ENCODE measurements at regions of chr16 and their contacts with region 1.

Region 1: DNA sequence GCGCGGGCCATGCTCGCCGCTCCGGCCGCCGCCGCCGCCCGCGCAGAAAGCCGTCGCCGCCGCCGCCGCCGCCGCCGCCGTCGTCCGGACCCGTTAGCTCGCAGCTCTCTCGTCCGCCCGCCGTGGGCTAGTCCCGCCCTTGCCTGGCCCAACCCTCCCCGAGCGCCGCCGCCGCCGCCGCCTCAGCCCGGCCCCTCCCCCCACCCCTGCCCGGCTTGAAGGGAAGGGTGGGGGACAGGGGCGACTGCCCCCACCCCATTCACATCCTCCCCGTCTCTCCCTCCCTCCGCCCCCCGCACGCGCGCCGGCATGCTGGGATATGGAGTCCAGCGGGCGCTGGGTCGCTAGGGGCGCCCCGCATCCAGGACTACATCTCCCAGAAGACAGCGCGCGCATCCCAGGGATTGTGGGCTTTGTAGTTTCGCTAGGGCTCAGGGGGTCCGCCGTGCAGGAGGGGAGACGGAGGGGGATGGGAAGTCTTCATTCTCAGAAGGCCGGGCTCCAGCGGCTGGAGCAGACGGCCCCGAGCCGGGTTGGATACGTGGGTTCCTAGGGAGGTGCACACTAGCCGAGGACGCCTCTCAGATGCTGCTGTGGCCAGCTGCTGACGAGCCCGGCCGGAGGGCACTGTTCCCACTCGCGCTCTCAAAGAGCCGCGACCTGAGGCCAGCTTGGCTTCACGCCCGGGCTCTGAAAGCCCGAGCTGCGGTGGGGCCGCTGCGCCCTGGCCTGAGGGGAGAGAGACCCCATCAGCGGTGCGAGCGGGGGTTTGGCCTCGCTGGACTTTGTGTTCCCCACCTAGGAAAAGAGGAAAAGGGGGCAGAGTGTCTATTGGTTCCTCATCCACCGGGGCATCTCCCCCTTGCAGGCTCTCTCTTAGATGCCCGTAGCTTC is at the start of gene ST3GAL2:
- DNase-seq: peak; percentile 96
- H3K4me3 Mint-ChIP-seq: peak within 1 kb of the TSS; percentile 91
- H3K27ac Mint-ChIP-seq: peak within 1 kb of the TSS; percentile 61
- H3K4me1 Mint-ChIP-seq: peaks cover 27% of the 10 kb centered on the region
- H3K27me3 Mint-ChIP-seq: no peaks in the 10 kb centered on the region
- total RNA-seq, gene ST3GAL2: 9.3 to 9.9 TPM

Region 2: DNA sequence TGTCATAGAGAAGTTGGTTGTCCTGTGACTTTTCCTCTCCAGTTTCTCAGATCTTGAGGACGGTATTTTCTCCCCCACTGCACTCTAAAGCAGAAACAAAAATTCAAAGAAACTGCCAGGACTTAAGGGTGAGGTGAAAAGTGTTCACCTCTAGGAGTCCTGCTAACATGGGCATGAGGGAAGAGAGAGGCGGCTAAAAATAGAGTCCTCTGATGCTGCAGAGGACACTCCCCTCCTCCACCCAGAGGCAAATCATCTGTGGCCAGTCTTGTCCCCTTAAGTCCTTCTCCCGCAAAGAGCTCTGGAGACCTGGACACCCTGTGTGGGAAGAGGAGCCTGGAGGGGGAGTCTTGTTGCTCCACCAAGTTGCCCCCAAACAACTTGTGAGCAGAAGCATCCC is 97.2 kb before region 1 on chr16:
- CTCF ChIA-PET with region 1: no interaction called
- intact Hi-C with region 1: loop called (anchors 1 kb)
- DNase-seq: no peak
- H3K4me3 Mint-ChIP-seq: no peak overlapping the region
- H3K27ac Mint-ChIP-seq: no peak overlapping the region
- H3K4me1 Mint-ChIP-seq: peaks cover 8% of the 10 kb centered on the region
- H3K27me3 Mint-ChIP-seq: no peaks in the 10 kb centered on the region

Region 3: DNA sequence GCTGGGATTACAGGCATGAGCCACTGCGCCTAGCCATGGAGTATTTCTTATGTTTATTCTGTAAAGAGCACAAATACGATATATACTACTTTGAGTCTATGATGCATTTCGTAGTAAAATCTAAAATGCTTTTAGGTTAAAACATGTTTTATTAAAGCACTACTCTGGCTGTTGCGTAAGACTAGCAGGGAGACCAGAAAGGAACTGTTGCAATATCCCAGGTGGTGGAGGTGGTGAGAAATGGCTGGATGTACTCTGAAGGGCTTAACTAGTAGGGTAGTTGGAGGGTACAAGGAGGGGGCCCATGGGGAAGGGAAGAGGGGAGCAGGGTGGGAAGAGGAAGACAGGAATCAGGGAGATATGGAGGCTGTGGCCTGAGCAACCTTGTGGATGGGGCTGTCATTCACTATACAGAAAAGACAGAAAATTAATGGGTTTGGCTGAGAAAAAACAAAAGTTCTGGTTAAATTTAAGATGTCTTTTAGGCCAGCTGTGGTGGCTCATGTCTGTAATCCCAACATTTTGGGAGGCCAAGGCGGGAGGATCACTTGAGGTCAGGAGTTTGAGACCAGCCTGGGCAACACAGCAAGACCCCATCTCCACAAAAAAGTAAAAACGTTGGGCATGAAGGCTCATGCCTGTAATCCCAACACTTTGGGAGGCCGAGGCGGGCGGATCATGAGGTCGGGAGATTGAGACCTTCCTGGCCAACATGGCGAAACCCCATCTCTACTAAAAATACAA is 36.1 kb before region 1 on chr16:
- CTCF ChIA-PET with region 1: no interaction called
- intact Hi-C with region 1: loop called (anchors 2 kb)
- DNase-seq: no peak
- H3K4me3 Mint-ChIP-seq: no peak overlapping the region
- H3K27ac Mint-ChIP-seq: peak overlapping the region; percentile 25
- H3K4me1 Mint-ChIP-seq: peaks cover 46% of the 10 kb centered on the region
- H3K27me3 Mint-ChIP-seq: no peaks in the 10 kb centered on the region

Region 4: DNA sequence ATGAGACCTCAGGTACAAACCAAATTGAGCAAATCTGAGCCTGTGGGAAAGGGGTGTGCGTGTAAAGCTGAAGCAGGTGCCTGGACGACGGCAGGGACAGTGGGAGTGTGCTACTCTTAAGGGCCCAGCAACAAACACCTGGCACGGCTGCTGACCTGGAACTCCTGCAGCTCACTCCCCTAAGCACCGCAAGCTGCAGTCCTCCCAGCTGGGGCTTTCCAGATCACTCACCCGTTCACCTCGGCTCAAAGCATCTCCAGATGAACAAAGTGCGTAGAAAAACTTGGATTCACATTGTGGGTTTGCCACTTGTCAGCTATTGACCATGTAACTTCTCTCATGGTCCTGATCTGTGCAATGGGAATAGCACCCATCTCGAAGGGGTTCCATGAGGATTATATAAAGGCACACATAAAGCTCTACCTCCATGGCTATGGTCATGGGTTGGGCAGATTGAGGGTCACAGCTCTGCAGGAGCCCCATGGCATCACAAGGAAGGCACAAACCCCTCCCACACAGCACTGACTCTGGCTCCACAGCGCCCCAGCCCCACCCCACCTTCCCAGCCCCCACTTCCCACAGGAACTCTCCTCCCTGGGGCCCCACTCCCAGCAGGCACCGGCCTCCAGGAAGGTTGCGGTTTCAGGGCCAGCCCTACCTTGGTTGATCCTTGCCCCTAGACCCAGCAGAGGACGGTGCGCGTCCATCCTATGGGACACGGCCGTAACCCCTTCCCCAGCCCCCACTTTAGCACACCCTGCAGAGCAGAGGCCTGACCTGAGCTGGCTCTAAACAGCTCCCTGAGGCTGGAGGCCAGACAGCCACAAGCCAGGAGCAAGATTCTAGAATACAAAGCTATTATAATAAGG is 22.2 kb before region 1 on chr16:
- CTCF ChIA-PET with region 1: interaction called, 10 read pairs
- intact Hi-C with region 1: no loop called
- DNase-seq: no peak
- H3K4me3 Mint-ChIP-seq: no peak overlapping the region
- H3K27ac Mint-ChIP-seq: no peak overlapping the region
- H3K4me1 Mint-ChIP-seq: peaks cover 33% of the 10 kb centered on the region
- H3K27me3 Mint-ChIP-seq: no peaks in the 10 kb centered on the region

Region 5: DNA sequence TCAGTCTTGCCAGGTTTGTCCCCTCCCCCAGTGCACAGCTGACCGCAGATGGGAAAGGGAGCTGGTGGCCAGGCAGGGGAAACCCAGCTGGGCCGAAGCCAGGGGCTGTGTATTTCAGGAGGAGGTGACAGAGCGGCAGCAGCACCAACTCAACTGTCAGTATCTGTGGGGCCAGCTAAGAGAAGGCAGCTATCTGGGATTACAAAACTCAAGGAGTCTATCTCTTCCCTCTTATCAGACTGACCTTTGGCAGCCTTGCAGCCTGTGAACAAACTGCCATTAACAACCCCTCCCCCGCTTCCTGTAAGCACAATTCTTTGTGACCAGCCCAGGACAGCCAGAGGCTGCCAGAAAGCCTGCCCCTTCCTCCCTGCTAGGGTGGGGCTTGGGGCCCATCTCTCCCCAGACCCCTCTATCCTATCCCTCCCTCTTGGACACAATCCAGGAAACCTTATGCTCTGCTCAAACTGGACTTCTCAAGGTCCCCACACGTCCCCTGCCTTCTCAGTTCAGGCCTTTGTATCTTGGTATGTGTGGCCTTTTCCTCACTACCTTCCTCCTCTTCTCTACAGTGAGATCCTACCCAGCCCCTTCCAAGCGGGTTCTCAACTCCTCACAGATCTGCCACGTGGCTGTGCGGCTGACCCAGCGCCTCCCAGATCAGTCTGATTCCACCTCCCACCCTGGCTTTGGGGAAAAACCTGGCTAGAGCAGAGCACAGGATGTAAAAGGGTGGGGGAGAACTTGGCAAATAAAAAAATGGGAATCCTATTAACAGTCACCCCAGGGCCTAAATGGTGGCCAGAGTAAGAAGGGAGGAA is 10.8 kb before region 1 on chr16:
- CTCF ChIA-PET with region 1: interaction called, 3 read pairs
- intact Hi-C with region 1: loop called (anchors 1 kb)
- DNase-seq: peak; percentile 82
- H3K4me3 Mint-ChIP-seq: no peak overlapping the region
- H3K27ac Mint-ChIP-seq: peak overlapping the region; percentile 62
- H3K4me1 Mint-ChIP-seq: peaks cover 60% of the 10 kb centered on the region
- H3K27me3 Mint-ChIP-seq: no peaks in the 10 kb centered on the region

Region 6: GRCh38 chr16:70454222-70455034 is 15.2 kb after region 1 on chr16 and contains the start of gene FCSK:
- CTCF ChIA-PET with region 1: interaction called, 3 read pairs
- intact Hi-C with region 1: loop called (anchors 1 kb)
- DNase-seq: peak; percentile 62
- H3K4me3 Mint-ChIP-seq: peak within 1 kb of the TSS; percentile 86
- H3K27ac Mint-ChIP-seq: peak within 1 kb of the TSS; percentile 88
- H3K4me1 Mint-ChIP-seq: peaks cover 18% of the 10 kb centered on the region
- H3K27me3 Mint-ChIP-seq: no peaks in the 10 kb centered on the region
- total RNA-seq, gene FCSK: 12.2 to 12.6 TPM

Region 7: GRCh38 chr16:70470927-70471341 is 31.7 kb after region 1 on chr16:
- CTCF ChIA-PET with region 1: no interaction called
- intact Hi-C with region 1: loop called (anchors 1 kb)
- DNase-seq: no peak
- H3K4me3 Mint-ChIP-seq: no peak overlapping the region
- H3K27ac Mint-ChIP-seq: no peak overlapping the region
- H3K4me1 Mint-ChIP-seq: no peaks in the 10 kb centered on the region
- H3K27me3 Mint-ChIP-seq: no peaks in the 10 kb centered on the region

Region 8: GRCh38 chr16:70553645-70554044 is 114.4 kb after region 1 on chr16:
- CTCF ChIA-PET with region 1: no interaction called
- intact Hi-C with region 1: no loop called
- DNase-seq: no peak
- H3K4me3 Mint-ChIP-seq: no peak overlapping the region
- H3K27ac Mint-ChIP-seq: peak overlapping the region; percentile 21
- H3K4me1 Mint-ChIP-seq: peaks cover 16% of the 10 kb centered on the region
- H3K27me3 Mint-ChIP-seq: no peaks in the 10 kb centered on the region

Region 9: GRCh38 chr16:70770626-70771552 is 331.7 kb after region 1 on chr16:
- CTCF ChIA-PET with region 1: no interaction called
- intact Hi-C with region 1: no loop called
- DNase-seq: peak; percentile 83
- H3K4me3 Mint-ChIP-seq: no peak overlapping the region
- H3K27ac Mint-ChIP-seq: no peak overlapping the region
- H3K4me1 Mint-ChIP-seq: peaks cover 3% of the 10 kb centered on the region
- H3K27me3 Mint-ChIP-seq: no peaks in the 10 kb centered on the region